ENCODE measurements at regions of chr1 and their contacts with region 1.

Region 1: DNA sequence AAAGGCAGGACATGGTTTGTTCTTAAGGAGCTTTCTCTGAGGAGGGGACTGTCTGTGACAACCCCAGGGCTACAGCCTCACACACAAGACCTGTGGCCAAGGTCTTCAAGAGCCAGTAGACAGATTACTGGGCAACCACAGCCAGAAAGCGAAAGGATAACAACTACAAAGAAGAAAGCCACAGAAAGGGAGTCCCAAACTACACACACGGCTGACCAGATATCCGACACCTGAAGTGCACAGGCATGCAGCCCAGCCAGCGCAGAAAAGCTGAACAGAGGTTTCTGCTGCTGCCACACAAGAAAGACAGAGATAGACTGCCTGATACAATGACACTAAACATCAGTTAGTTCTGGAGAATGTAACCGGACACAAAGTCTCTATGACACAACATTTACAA is 21.4 kb upstream of the NADK start:
- DNase-seq: no peak
- H3K4me3 ChIP-seq: no peak overlapping the region
- H3K4me3 Mint-ChIP-seq: no peak overlapping the region
- H3K27ac ChIP-seq: no peak overlapping the region
- H3K27ac Mint-ChIP-seq: peak overlapping the region in 5 of 7 donors; percentile 18 to 85 (median 68)
- H3K4me1 ChIP-seq: no peaks in the 10 kb centered on the region
- H3K4me1 Mint-ChIP-seq: peaks cover 12 to 41% (median 26%) of the 10 kb centered on the region in 4 donors
- H3K27me3 ChIP-seq: no peaks in the 10 kb centered on the region
- H3K27me3 Mint-ChIP-seq: no peaks in the 10 kb centered on the region

Region 2: DNA sequence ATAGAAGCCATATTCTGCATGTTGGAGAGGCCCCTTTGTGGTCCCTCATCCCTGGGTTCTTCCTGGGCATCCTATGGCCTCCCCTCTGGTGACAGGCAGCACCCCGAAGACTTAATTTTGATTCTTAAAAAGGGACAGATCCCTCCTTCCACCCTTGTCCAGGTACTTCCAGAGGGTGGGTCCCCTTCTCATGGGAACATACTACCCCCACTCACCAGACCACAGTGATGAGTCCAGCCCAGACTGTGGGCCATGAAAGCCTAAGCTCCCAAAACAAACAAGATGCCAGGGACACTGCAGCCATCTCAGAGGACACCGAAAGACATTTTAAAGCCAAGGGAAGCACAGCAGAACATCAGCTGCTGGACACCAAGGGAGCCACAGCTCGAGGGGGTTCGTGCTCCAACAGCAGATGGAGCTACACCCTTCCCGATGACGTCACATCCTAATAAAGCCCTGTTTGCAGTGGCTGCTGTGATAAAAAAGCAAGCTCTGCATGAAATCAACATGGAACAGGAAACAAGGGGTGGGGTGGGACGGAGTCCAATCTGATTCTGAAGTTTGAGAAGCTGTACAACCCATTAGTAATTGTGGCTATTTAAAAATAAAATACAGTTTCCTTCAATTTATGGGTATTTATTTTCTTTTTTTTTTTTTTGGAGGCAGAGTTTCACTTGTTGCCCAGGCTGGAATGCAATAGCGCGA is 58.8 kb after region 1 on chr1:
- CTCF ChIA-PET with region 1: no interaction called
- POLR2A ChIA-PET with region 1: no interaction called
- intact Hi-C with region 1: loop called (anchors 10 kb)
- DNase-seq: peak; percentile 39 to 61 (median 47)
- H3K4me3 ChIP-seq: no peak overlapping the region
- H3K4me3 Mint-ChIP-seq: peak overlapping the region in 7 of 8 donors; percentile 44 to 62 (median 55)
- H3K27ac ChIP-seq: peak overlapping the region; percentile 49
- H3K27ac Mint-ChIP-seq: peak overlapping the region; percentile 73 to 95 (median 89)
- H3K4me1 ChIP-seq: peaks cover 88% of the 10 kb centered on the region
- H3K4me1 Mint-ChIP-seq: peaks cover 49 to 88% (median 70%) of the 10 kb centered on the region in 4 donors
- H3K27me3 ChIP-seq: no peaks in the 10 kb centered on the region
- H3K27me3 Mint-ChIP-seq: no peaks in the 10 kb centered on the region

Region 3: GRCh38 chr1:2275796-2276536 is 476.2 kb after region 1 on chr1:
- CTCF ChIA-PET with region 1: no interaction called
- POLR2A ChIA-PET with region 1: no interaction called
- intact Hi-C with region 1: no loop called
- DNase-seq: no peak
- H3K4me3 ChIP-seq: no peak overlapping the region
- H3K4me3 Mint-ChIP-seq: peak overlapping the region in 2 of 8 donors; percentile 15 to 51
- H3K27ac ChIP-seq: no peak overlapping the region
- H3K27ac Mint-ChIP-seq: peak overlapping the region; percentile 18 to 87 (median 75)
- H3K4me1 ChIP-seq: peaks cover 83% of the 10 kb centered on the region
- H3K4me1 Mint-ChIP-seq: peaks cover 19 to 79% (median 52%) of the 10 kb centered on the region in 4 donors
- H3K27me3 ChIP-seq: no peaks in the 10 kb centered on the region
- H3K27me3 Mint-ChIP-seq: no peaks in the 10 kb centered on the region